HEK293T (cell line): ENCODE measurements at regions of chr14 and their contacts with region 1.

Region 1: DNA sequence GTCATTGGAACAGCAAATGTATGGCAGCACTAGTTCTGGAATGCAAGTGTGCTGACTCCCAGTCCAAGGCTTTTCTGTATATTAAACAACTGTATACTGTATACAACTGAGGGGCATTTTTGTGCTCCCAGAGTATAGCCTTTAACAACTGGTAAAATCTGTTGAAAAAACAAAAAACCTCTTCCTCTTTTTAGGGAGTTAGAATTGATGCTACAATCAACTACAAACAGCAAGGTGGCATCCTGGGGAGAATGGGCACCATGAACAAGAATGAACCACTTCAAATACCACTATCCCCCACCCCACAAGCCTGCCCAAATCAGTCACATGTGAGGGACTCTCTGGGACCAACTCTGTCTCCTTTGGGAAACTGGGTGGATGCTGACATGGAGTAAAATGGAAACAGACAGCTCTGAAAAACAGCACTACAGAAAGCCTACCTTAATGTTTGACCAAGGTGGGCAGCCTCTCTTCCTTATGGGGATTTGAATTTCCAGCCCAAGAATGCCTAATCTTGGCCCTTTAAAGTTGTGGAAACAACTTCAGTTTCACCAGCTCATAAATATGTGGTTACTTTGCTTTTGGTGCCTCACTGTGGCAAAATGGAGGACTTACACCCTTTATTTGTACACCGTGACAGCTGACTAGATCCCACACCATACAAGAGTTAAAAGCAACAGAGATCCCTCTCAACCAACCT is 7.5 kb downstream of the VTI1B start:
- DNase-seq: peak; percentile 57

Region 2: GRCh38 chr14:67619446-67620216 is 47.3 kb before region 1 on chr14 and contains the start of gene ARG2:
- CTCF ChIA-PET with region 1: interaction called, 13 read pairs
- POLR2A ChIA-PET with region 1: interaction called, 18 read pairs
- DNase-seq: peak; percentile 96